Heart left ventricle (tissue), 16 donors: ENCODE measurements at regions of chr9 and their contacts with region 1.

Region 1: GRCh38 chr9:94134629-94135028 is 50.4 kb downstream of the PTPDC1 start:
- DNase-seq: no peak
- ATAC-seq: no peak
- H3K4me3 ChIP-seq: no peak overlapping the region
- H3K27ac ChIP-seq: peak overlapping the region; percentile 31 to 89 (median 64)
- H3K4me1 ChIP-seq: peaks cover 0 to 30% (median 18%) of the 10 kb centered on the region in 12 donors
- H3K27me3 ChIP-seq: no peaks in the 10 kb centered on the region
- CTCF ChIP-seq: no peak
- POLR2A ChIP-seq: no peak

Region 2: GRCh38 chr9:94084314-94084713 is 50.3 kb before region 1 on chr9 and contains the start of gene PTPDC1:
- intact Hi-C with region 1: loop called in 4 of 10 experiments (anchors 2 to 10 kb)
- DNase-seq: peak in 1 of 5 donors; percentile 21
- ATAC-seq: peak in 3 of 4 donors; percentile 42 to 54 (median 52)
- H3K4me3 ChIP-seq: peak within 1 kb of the TSS in 5 of 12 donors; percentile 16 to 43 (median 26)
- H3K27ac ChIP-seq: peak within 1 kb of the TSS in 9 of 12 donors; percentile 15 to 76 (median 53)
- H3K4me1 ChIP-seq: peaks cover 0 to 45% (median 31%) of the 10 kb centered on the region in 12 donors
- H3K27me3 ChIP-seq: no peaks in the 10 kb centered on the region
- CTCF ChIP-seq: no peak
- POLR2A ChIP-seq: no peak
- total RNA-seq, gene PTPDC1: 6.4 to 12.3 (median 9.5) TPM

Region 3: DNA sequence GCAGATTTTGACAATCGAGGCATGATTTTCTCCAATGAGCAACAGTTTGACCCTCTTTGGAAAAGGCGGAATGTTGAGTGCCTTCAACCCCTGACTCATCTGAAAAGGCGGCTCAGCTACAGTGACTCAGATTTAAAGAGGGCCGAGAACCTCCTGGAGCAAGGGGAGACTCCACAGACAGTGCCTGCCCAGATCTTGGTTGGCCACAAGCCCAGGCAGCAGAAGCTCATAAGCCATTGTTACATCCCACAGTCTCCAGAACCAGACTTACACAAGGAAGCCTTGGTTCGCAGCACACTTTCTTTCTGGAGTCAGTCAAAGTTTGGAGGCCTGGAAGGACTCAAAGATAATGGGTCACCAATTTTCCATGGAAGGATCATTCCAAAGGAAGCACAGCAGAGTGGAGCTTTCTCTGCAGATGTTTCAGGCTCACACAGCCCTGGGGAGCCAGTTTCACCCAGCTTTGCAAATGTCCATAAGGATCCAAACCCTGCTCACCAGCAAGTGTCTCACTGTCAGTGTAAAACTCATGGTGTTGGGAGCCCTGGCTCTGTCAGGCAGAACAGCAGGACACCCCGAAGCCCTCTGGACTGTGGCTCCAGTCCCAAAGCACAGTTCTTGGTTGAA is 36.7 kb before region 1 on chr9:
- intact Hi-C with region 1: loop called in 1 of 10 experiments (anchors 5 kb)
- DNase-seq: peak in 1 of 5 donors; percentile 50
- ATAC-seq: peak in 2 of 4 donors; percentile 34 to 73
- H3K4me3 ChIP-seq: no peak overlapping the region
- H3K27ac ChIP-seq: no peak overlapping the region
- H3K4me1 ChIP-seq: no peaks in the 10 kb centered on the region
- H3K27me3 ChIP-seq: no peaks in the 10 kb centered on the region
- CTCF ChIP-seq: no peak
- POLR2A ChIP-seq: no peak

Region 4: GRCh38 chr9:94173632-94174031 is 39.0 kb after region 1 on chr9:
- intact Hi-C with region 1: loop called in 1 of 10 experiments (anchors 5 kb)
- DNase-seq: no peak
- ATAC-seq: peak in 2 of 4 donors; percentile 15 to 19
- H3K4me3 ChIP-seq: no peak overlapping the region
- H3K27ac ChIP-seq: peak overlapping the region in 3 of 12 donors; percentile 9 to 99 (median 9)
- H3K4me1 ChIP-seq: peaks cover 29 to 100% (median 97%) of the 10 kb centered on the region in 12 donors
- H3K27me3 ChIP-seq: no peaks in the 10 kb centered on the region
- CTCF ChIP-seq: no peak
- POLR2A ChIP-seq: no peak

Region 5: GRCh38 chr9:94199776-94200175 is 65.1 kb after region 1 on chr9:
- intact Hi-C with region 1: no loop called
- DNase-seq: no peak
- ATAC-seq: no peak
- H3K4me3 ChIP-seq: no peak overlapping the region
- H3K27ac ChIP-seq: no peak overlapping the region
- H3K4me1 ChIP-seq: peaks cover 0 to 4% (median 0%) of the 10 kb centered on the region in 12 donors
- H3K27me3 ChIP-seq: no peaks in the 10 kb centered on the region
- CTCF ChIP-seq: no peak
- POLR2A ChIP-seq: no peak